ENCODE measurements at regions of chr22 and their contacts with region 1.

Region 1: DNA sequence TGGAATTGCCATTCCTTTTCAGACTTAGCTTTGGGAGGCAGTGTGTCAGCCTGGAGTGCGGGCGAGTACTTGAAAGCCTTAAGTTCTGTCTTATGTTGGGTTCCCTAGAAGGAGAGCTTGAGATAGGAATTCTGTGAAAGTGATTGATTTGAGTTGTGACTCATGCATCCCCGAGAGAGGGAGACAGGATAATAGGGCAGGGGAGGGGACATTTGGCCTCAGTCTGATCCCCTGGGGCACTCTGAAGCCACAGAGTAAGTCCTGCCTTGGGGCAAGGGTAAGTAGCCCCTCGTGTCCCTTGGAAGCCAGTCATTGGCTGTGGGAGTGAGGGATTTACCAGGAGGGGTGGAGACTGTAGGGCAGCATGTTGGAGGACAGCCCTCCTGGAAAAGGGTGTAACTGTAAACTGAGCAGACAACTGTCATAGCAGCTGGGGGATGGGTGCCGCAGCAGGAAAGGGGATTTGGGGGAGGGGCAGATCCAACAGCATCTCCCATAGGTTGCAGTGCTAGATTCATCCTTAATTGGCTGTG is 44.0 kb downstream of the KIAA1671 start:
- DNase-seq: peak; percentile 26
- H3K4me3 Mint-ChIP-seq: no peak overlapping the region
- H3K27ac Mint-ChIP-seq: peak overlapping the region; percentile 13
- H3K4me1 Mint-ChIP-seq: peaks cover 51% of the 10 kb centered on the region
- H3K27me3 Mint-ChIP-seq: no peaks in the 10 kb centered on the region
- CTCF ChIP-seq: no peak

Region 2: GRCh38 chr22:25057013-25057881 is 60.8 kb after region 1 on chr22:
- CTCF ChIA-PET with region 1: no interaction called
- intact Hi-C with region 1: loop called (anchors 10 kb)
- DNase-seq: peak; percentile 86
- H3K4me3 Mint-ChIP-seq: no peak overlapping the region
- H3K27ac Mint-ChIP-seq: no peak overlapping the region
- H3K4me1 Mint-ChIP-seq: no peaks in the 10 kb centered on the region
- H3K27me3 Mint-ChIP-seq: no peaks in the 10 kb centered on the region
- CTCF ChIP-seq: peak; percentile 95

Region 3: DNA sequence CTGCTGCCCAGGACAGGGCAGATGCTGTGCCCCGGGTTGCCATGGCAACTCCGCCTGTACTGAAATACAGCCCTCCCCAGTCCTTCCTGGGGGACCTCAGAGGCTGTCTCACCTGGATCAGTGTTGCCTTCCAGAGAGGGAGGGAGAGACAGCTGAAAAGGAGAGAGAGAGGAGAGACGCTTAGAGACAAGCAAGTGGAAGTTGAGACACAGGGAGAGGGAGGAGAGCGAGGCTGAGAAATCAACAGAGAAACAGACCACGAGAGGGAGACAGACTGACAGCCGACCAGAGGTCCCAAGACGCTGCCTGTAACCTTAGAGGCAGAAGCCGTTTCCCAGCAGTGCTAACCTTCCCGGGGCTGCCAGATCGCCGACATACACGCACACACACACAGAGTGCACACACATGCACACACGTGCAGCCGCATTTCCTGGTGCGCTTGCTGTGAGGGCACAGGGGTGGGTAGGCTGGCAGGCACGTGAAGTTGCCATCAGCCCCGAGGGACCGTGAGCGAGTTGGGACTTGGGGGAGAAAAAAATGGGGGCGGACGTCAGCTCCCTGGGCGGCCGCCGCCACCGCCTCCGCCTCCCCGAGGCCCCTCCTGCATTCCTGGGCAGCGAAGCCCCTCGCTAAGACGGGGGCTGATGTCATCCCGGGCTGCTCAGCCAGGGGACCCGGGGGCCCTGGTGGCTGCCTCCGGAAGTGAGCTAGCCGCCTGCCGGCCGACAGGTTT is 114.5 kb after region 1 on chr22:
- CTCF ChIA-PET with region 1: no interaction called
- intact Hi-C with region 1: no loop called
- DNase-seq: peak; percentile 91
- H3K4me3 Mint-ChIP-seq: peak overlapping the region; percentile 88
- H3K27ac Mint-ChIP-seq: peak overlapping the region; percentile 100
- H3K4me1 Mint-ChIP-seq: peaks cover 40% of the 10 kb centered on the region
- H3K27me3 Mint-ChIP-seq: no peaks in the 10 kb centered on the region
- CTCF ChIP-seq: peak; percentile 63